Endothelial cell of umbilical vein (primary cell): ENCODE measurements at regions of chr5 and their contacts with region 1.

Region 1: DNA sequence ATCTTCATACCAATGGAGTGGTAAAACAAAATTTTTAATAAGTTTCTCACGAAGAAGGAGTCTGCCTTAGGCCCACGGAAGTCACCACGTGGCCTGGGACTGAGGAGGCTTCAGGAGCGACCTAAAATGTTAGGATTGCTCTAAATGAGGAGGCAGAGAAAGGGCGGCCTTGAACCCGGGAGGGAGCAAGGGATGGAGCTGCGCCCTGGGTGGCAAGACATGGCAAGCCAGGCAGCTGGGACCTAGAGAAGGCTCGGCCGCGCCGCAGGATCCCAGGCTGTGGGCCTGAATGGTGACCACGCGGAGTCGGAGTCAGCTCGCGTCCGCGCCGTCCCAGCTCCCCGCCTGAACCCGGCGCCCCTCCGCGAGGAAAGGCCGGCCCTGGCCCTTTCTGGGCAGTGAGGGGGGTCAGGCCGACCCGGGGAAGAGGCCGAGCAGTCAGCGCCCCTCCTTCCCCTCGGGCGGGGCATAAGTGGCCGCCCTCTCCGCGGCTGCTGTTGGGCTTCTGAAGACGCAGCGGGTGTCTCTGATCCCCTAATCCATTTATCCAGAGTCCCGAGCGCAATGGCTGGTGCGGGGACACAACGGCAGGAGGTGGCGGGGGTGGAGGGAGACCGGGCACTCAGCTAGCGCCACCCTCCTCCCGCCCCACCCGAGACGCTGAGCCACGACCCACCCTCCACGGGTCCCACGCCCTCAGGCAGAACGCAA is 10.6 kb downstream of the IRX1 start:
- DNase-seq: no peak
- H3K4me3 ChIP-seq: no peak overlapping the region
- H3K27ac ChIP-seq: no peak overlapping the region
- H3K4me1 ChIP-seq: no peaks in the 10 kb centered on the region
- H3K27me3 ChIP-seq: peaks cover 14 to 18% of the 10 kb centered on the region in 2 experiments
- CTCF ChIP-seq: no peak
- POLR2A ChIP-seq: no peak

Region 2: DNA sequence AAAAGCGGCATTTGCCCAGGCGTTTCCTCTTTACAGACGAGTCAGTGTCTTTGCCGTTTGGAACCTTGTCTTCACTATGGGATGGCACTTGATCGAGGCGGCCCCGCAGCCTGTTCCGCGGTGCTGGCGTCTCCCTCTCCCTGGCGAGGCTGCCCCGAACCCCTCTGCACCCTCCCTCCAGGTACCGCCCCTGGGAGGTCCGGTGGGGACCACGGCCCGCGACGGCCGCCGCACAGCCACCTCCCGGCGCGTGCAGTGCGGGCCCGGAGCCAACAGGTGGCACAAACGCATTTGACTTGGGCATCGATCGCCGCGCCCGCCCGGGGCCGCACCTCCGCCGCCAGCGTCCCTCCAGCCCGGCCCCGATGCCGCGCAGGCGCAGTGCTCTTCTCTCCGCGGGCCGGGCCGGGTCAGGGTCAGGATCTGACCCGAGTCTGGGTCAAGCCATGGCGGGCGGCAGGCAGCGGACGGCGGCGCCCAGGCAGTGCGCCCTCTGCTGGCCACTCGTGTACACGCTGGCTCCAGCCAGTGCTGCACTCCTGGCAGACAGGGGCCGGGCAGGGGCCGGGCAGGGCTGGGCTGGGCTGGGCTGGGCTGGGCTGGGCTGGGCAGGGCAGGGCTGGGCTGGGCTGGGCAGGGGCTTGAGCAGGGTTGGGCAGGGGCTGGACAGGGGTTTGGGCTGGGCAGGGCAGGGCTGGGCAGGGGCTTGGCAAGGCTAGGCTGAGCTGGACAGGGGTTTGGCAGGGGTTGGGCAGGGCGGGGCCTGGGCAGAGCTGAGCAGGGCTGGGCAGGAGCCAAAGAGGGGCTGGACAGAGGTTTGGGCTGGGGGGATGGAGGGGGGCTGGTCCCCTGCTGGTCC is 1567.7 kb before region 1 on chr5:
- CTCF ChIA-PET with region 1: no interaction called
- POLR2A ChIA-PET with region 1: no interaction called
- dilution Hi-C with region 1: no loop called
- intact Hi-C with region 1: loop called (anchors 5 kb)
- DNase-seq: peak; percentile 40
- H3K4me3 ChIP-seq: peak overlapping the region in 2 of 3 experiments; percentile 12 to 36
- H3K27ac ChIP-seq: no peak overlapping the region
- H3K4me1 ChIP-seq: no peaks in the 10 kb centered on the region
- H3K27me3 ChIP-seq: no peaks in the 10 kb centered on the region
- CTCF ChIP-seq: peak; percentile 74 to 80
- POLR2A ChIP-seq: no peak

Region 3: DNA sequence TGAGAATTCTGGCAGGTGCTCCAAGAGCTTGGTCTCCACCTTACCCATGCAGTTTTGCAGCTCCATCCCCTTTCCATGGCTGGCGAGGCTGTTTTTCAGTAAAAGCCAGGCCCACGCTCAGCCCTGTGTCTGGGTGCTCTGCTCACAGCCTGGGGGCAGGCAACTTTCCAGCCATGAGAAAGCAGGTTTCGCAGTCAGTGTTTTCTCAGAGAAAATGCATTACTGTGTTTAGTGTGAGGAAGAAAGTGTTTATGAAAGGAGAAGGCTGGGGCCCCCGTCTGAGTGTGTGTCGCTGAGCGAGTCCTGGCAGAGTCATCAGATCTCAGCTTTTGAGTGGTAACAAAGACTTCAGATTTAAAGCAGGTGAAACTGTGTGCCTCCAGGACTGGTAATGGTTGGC is 237.4 kb after region 1 on chr5:
- CTCF ChIA-PET with region 1: no interaction called
- POLR2A ChIA-PET with region 1: no interaction called
- dilution Hi-C with region 1: no loop called
- intact Hi-C with region 1: no loop called
- DNase-seq: no peak
- H3K4me3 ChIP-seq: no peak overlapping the region
- H3K27ac ChIP-seq: no peak overlapping the region
- H3K4me1 ChIP-seq: no peaks in the 10 kb centered on the region
- H3K27me3 ChIP-seq: no peaks in the 10 kb centered on the region
- CTCF ChIP-seq: no peak
- POLR2A ChIP-seq: no peak